ENCODE measurements at regions of chr7 and their contacts with region 1.

Region 1: GRCh38 chr7:147523056-147523455 is 1067.5 kb upstream of the C7orf33 start:
- DNase-seq: no peak
- H3K4me3 ChIP-seq: no peak overlapping the region
- CTCF ChIP-seq: no peak

Region 2: DNA sequence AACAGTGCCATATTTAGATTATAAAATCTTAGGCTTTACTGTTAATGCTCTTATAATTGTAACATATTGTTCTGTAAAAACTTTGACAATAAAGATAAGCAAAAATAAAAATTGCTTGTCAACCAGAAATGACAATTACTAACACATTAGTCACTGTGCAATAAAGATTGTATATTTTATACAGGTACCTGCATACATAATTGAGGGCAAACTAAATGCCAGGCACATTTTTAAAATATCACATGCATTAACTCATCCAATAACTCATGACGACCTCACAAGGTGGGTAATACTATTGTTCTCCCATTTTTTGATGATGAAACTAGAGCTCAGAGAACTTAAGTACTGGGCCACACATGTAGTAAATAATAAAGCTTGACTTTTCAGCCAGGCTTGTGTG is 47.3 kb after region 1 on chr7:
- in situ Hi-C with region 1: loop called (anchors 5 kb)
- DNase-seq: no peak
- H3K4me3 ChIP-seq: no peak overlapping the region
- CTCF ChIP-seq: no peak

Region 3: DNA sequence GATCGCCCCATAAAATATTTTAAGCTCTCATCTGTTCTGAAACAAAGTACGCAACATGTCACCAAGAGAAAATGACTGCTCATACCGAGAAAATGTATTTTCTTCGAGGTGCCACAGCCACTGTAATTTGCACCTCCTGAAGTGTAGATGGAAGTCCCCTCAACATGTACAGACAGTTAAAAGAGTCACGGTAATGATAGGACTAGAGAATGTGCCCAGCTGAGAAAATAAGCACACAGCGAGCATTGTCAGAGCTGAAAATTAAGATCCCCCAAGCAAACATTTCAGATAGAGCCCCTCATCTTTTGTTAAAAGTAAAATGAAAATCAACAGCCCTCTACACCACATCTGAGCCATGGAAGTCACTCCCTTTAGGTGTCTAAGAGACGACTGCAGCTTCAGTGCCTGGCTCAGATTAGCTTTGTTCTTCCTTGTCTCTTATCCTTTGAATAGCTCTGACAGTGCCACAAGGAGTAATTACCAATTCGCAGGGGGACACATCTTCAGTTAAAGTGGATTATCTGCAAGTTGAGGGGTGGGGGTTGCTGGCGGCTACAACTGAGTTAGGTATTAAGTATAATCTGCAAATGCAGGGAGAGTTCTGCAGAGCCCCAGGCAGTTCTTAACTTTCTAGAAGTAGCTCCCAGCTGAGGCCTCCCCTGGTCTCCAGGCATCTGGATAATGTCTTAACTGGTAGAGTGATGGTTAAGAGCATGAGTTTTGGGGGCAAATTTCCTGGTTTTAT is 844.8 kb after region 1 on chr7:
- in situ Hi-C with region 1: no loop called
- DNase-seq: no peak
- H3K4me3 ChIP-seq: no peak overlapping the region
- CTCF ChIP-seq: no peak